ENCODE measurements at regions of chr1 and their contacts with region 1.

Region 1: DNA sequence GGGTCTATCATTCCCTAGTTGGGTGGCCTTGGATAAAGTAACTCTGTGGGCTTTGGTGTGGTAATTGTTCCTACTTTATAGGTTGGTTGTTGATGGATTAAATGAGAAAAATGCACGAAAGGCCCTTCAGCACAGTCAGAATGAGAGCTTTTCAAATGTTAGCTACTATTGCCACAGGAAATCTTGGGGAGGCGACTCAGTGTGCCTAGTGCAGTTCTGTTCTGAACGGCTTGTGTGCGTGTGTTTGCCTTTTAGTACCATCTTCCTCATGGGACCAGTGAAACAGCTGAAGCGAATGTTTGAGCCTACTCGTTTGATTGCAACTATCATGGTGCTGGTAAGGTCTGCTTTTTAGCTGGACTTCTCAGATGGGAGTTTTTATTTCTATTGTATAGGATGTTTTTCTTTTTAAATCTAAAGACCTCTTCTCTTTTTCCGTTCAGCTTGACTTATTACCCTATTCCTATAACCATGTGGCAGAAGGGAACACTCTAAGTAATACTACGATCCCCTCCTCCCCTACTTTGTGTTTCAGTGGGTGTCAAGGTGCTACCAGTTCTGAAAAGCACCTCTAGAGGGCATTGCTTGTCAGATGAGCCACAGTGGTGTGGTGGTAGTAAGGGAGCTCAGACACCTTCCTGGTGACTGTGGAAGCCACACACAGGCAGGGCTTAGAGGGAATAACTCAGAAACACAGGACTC is 9.2 kb downstream of the SFT2D2 start:
- DNase-seq: no peak
- H3K4me3 ChIP-seq: no peak overlapping the region
- H3K27ac ChIP-seq: no peak overlapping the region
- H3K4me1 ChIP-seq: no peaks in the 10 kb centered on the region
- H3K27me3 ChIP-seq: no peaks in the 10 kb centered on the region
- CTCF ChIP-seq: peak; percentile 49 to 89 (median 81)
- EP300 ChIP-seq: no peak
- POLR2A ChIP-seq: no peak
- RAD21 ChIP-seq: peak; percentile 69 to 83

Region 2: GRCh38 chr1:168082008-168082876 is 152.8 kb before region 1 on chr1:
- CTCF ChIA-PET with region 1: interaction called, 11 read pairs
- POLR2A ChIA-PET with region 1: no interaction called
- DNase-seq: peak; percentile 60 to 88
- H3K4me3 ChIP-seq: no peak overlapping the region
- H3K27ac ChIP-seq: no peak overlapping the region
- H3K4me1 ChIP-seq: 0 out of 7 replicates have a peak, but pooled peaks cover 0 to 2% (median 0%) of the 10 kb centered on the region in 4 experiments
- H3K27me3 ChIP-seq: no peaks in the 10 kb centered on the region
- CTCF ChIP-seq: peak; percentile 79 to 98 (median 94)
- EP300 ChIP-seq: no peak
- POLR2A ChIP-seq: 0 out of 3 replicates have a peak, but pooled peaks of 1 of the 2 experiments have one; percentile 20
- RAD21 ChIP-seq: peak; percentile 82

Region 3: GRCh38 chr1:168167806-168168205 is 67.2 kb before region 1 on chr1:
- CTCF ChIA-PET with region 1: interaction called, 10 read pairs
- POLR2A ChIA-PET with region 1: no interaction called
- DNase-seq: no peak
- H3K4me3 ChIP-seq: no peak overlapping the region
- H3K27ac ChIP-seq: no peak overlapping the region
- H3K4me1 ChIP-seq: no peaks in the 10 kb centered on the region
- H3K27me3 ChIP-seq: no peaks in the 10 kb centered on the region
- CTCF ChIP-seq: no peak
- EP300 ChIP-seq: no peak
- POLR2A ChIP-seq: no peak
- RAD21 ChIP-seq: no peak

Region 4: DNA sequence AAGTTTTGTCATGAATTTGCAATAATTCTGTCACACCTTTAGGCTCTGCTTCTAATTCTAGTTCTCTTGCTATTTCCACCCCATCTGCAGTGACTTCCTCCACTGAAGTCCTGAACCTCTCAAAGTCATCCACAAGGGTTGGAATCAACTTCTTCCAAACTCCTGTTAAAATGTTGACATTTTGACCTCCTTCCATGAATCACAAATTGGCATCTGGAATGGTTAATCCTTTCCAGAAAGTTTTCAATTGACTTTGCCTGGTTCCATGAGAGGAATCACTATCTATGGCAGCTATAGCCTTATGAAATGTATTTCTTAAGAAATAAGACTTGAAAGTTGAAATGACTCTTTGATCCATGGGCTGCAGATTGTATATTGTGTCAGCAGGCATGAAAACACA is 28.9 kb before region 1 on chr1:
- CTCF ChIA-PET with region 1: no interaction called
- POLR2A ChIA-PET with region 1: no interaction called
- DNase-seq: no peak
- H3K4me3 ChIP-seq: no peak overlapping the region
- H3K27ac ChIP-seq: no peak overlapping the region
- H3K4me1 ChIP-seq: no peaks in the 10 kb centered on the region
- H3K27me3 ChIP-seq: no peaks in the 10 kb centered on the region
- CTCF ChIP-seq: no peak
- EP300 ChIP-seq: no peak
- POLR2A ChIP-seq: no peak
- RAD21 ChIP-seq: no peak

Region 5: GRCh38 chr1:168252204-168252733 is 17.3 kb after region 1 on chr1:
- CTCF ChIA-PET with region 1: interaction called, 18 read pairs
- POLR2A ChIA-PET with region 1: no interaction called
- DNase-seq: no peak
- H3K4me3 ChIP-seq: no peak overlapping the region
- H3K27ac ChIP-seq: no peak overlapping the region
- H3K4me1 ChIP-seq: peaks cover 0 to 4% (median 1%) of the 10 kb centered on the region in 4 experiments; a peak in 2 of 7 replicates
- H3K27me3 ChIP-seq: no peaks in the 10 kb centered on the region
- CTCF ChIP-seq: no peak
- EP300 ChIP-seq: no peak
- POLR2A ChIP-seq: no peak
- RAD21 ChIP-seq: no peak

Region 6: DNA sequence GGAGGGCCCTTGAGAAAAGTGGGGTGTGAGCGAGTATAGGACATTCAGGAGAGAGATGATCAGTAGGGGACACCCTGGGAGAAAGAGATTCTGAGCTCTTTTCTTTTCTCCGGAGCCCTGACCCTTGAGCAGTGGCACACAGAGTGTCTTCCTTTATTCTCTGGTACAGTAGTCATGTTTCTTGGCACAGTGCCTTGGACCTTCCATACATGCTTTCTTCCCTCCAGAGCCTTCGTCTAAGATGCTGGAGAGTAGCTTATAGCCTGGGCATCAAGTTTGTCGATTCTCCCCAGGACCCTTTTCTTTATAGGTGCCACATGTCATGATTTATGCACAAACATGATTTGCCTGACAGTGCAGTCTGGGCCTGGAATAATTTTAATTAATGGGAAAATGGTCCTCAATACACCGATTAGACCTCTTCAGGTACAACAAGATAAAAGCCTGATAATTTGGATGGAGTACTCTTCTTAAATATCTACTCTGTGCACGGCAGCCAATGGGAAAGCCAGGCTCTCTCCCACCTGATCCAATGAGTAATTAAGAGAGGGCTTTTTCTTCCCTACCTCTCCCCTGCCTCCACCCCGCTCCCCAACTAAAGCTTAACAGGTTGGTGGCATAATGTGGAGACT is 45.4 kb after region 1 on chr1 and contains the start of gene TBX19:
- CTCF ChIA-PET with region 1: interaction called, 10 read pairs
- POLR2A ChIA-PET with region 1: no interaction called
- DNase-seq: no peak
- H3K4me3 ChIP-seq: no peak within 1 kb of the TSS
- H3K27ac ChIP-seq: no peak within 1 kb of the TSS
- H3K4me1 ChIP-seq: peaks cover 0 to 6% (median 0%) of the 10 kb centered on the region in 4 experiments; a peak in 2 of 7 replicates
- H3K27me3 ChIP-seq: no peaks in the 10 kb centered on the region
- CTCF ChIP-seq: no peak
- EP300 ChIP-seq: no peak
- POLR2A ChIP-seq: no peak
- RAD21 ChIP-seq: no peak
- total RNA-seq, gene TBX19: 0.80 and 1.0 TPM in 2 replicates

Region 7: DNA sequence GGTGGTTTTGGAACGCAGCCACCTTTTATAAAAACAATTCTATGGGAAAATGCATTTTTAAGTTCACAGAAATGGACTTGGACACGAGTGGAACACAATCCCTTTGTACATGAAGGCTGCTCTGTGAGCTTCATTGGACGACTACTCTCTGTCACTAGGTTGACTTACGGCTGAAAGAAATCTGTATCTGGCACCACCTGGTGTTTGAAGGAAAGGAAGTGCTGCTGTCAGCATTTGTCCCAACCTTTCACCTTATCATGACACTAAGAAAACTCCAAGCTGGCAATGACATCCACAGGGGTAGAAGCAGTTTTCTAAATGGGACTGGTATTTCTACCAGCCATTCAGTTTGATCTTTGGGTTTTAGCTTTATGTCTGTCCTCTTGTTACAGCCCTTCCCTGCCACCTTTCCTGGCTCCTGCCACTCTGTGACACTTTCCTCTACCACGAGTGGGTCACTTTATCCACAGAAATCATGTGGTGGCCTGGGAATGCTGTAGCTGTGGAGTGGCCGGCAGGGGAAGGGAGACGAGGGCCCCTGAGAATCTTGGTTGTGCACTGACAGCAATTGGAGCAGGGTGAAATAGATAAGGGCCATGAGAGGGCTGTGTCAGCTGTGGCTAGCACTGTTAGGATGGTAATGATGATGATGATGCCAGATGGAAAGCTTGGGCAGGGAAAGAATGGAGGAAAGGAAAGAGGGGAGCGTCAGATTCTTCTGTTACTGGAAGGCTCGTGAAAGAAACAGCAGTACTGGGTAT is 130.9 kb after region 1 on chr1:
- CTCF ChIA-PET with region 1: interaction called, 10 read pairs
- POLR2A ChIA-PET with region 1: no interaction called
- DNase-seq: no peak
- H3K4me3 ChIP-seq: no peak overlapping the region
- H3K27ac ChIP-seq: no peak overlapping the region
- H3K4me1 ChIP-seq: no peaks in the 10 kb centered on the region
- H3K27me3 ChIP-seq: no peaks in the 10 kb centered on the region
- CTCF ChIP-seq: peak in 2 of 3 experiments; percentile 43; a peak in 3 of 4 replicates
- EP300 ChIP-seq: no peak
- POLR2A ChIP-seq: no peak
- RAD21 ChIP-seq: peak; percentile 35 to 58; a peak in 3 of 4 replicates